ENCODE measurements at regions of chr10 and their contacts with region 1.

Region 1: GRCh38 chr10:25080880-25081581 is 64.6 kb downstream of the THNSL1 start:
- DNase-seq: peak; percentile 88
- ATAC-seq: peak; percentile 82
- H3K4me3 ChIP-seq: no peak overlapping the region
- H3K27ac ChIP-seq: peak overlapping the region; percentile 37
- H3K4me1 ChIP-seq: peaks cover 72% of the 10 kb centered on the region
- H3K27me3 ChIP-seq: no peaks in the 10 kb centered on the region
- CTCF ChIP-seq: peak; percentile 94
- EP300 ChIP-seq: peak in 1 of 2 experiments; percentile 64; a peak in 2 of 4 replicates
- POLR2A ChIP-seq: no peak
- RAD21 ChIP-seq: peak; percentile 88

Region 2: GRCh38 chr10:24642622-24643417 is 438.2 kb before region 1 on chr10:
- CTCF ChIA-PET with region 1: interaction called, 11 read pairs
- POLR2A ChIA-PET with region 1: interaction called, 4 read pairs
- in situ Hi-C with region 1: loop called (anchors 10 kb)
- intact Hi-C with region 1: loop called (anchors 1 kb)
- DNase-seq: peak; percentile 89
- ATAC-seq: peak; percentile 99
- H3K4me3 ChIP-seq: no peak overlapping the region
- H3K27ac ChIP-seq: peak overlapping the region; percentile 5
- H3K4me1 ChIP-seq: peaks cover 12% of the 10 kb centered on the region
- H3K27me3 ChIP-seq: no peaks in the 10 kb centered on the region
- CTCF ChIP-seq: peak; percentile 85
- EP300 ChIP-seq: peak in 1 of 2 experiments; percentile 57; a peak in 1 of 4 replicates
- POLR2A ChIP-seq: no peak
- RAD21 ChIP-seq: peak; percentile 81

Region 3: GRCh38 chr10:24814568-24815313 is 266.3 kb before region 1 on chr10:
- CTCF ChIA-PET with region 1: no interaction called
- POLR2A ChIA-PET with region 1: no interaction called
- in situ Hi-C with region 1: no loop called
- intact Hi-C with region 1: loop called (anchors 10 kb)
- DNase-seq: peak; percentile 24
- ATAC-seq: no peak
- H3K4me3 ChIP-seq: no peak overlapping the region
- H3K27ac ChIP-seq: no peak overlapping the region
- H3K4me1 ChIP-seq: peaks cover 10% of the 10 kb centered on the region
- H3K27me3 ChIP-seq: no peaks in the 10 kb centered on the region
- CTCF ChIP-seq: no peak
- EP300 ChIP-seq: no peak
- POLR2A ChIP-seq: no peak
- RAD21 ChIP-seq: no peak

Region 4: GRCh38 chr10:24974976-24975375 is 106.1 kb before region 1 on chr10:
- CTCF ChIA-PET with region 1: no interaction called
- POLR2A ChIA-PET with region 1: no interaction called
- in situ Hi-C with region 1: no loop called
- intact Hi-C with region 1: loop called (anchors 1 kb)
- DNase-seq: peak; percentile 32
- ATAC-seq: peak; percentile 67
- H3K4me3 ChIP-seq: no peak overlapping the region
- H3K27ac ChIP-seq: no peak overlapping the region
- H3K4me1 ChIP-seq: peaks cover 23% of the 10 kb centered on the region
- H3K27me3 ChIP-seq: no peaks in the 10 kb centered on the region
- CTCF ChIP-seq: no peak
- EP300 ChIP-seq: no peak
- POLR2A ChIP-seq: no peak
- RAD21 ChIP-seq: no peak

Region 5: DNA sequence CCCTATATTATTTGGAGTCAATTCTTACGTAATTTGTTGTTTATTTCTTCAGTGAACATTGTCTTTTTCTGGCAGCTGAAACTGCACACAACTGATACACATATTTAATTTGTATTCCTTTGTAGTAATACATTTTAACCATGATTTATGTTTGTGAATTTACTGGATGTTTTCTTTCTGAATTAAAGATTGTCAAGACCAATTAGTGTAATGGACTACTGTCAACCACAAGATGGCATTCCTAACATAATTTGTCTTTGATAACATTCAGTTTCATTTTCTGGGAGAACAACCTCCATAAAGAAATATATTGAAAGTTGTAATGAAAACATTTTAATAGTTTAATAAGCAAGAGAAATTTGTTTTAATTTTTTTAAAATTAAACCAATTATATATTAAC is 54.6 kb before region 1 on chr10:
- CTCF ChIA-PET with region 1: interaction called, 12 read pairs
- POLR2A ChIA-PET with region 1: no interaction called
- in situ Hi-C with region 1: no loop called
- intact Hi-C with region 1: loop called (anchors 2 kb)
- DNase-seq: no peak
- ATAC-seq: no peak
- H3K4me3 ChIP-seq: no peak overlapping the region
- H3K27ac ChIP-seq: no peak overlapping the region
- H3K4me1 ChIP-seq: 0 out of 2 replicates have a peak, but pooled peaks cover 6% of the 10 kb centered on the region
- H3K27me3 ChIP-seq: no peaks in the 10 kb centered on the region
- CTCF ChIP-seq: peak; percentile 42
- EP300 ChIP-seq: no peak
- POLR2A ChIP-seq: no peak
- RAD21 ChIP-seq: no peak

Region 6: DNA sequence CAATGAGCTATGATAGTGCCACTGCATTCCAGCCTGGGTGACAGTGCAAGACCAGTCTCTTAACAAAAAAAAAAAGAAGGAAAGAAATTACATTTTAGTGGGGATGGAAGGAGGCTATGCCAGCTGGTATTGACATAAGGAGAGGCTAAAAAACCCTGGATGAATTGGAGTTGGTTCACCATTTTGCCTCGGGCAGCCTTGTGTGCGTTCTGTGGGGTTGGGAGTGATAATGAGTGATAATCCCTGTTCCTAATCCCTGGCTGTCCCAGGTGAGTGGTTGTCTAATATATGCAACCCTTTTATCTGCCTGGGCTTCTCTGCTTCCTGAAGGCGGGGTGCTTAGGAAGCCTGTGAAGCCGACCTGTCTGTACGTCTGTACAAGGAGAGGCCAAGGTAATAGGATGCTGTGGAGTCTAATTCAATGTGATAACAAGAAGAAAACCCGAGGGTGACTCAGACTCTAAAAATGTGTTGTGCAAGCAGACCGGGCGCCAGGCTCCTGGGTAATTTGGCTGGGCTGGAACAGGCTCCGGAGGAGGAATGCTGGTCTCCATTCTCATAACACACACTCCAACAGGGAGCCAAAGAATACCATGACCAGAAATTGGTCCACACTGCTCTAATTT is 21.2 kb before region 1 on chr10:
- CTCF ChIA-PET with region 1: no interaction called
- POLR2A ChIA-PET with region 1: interaction called, 8 read pairs
- in situ Hi-C with region 1: no loop called
- intact Hi-C with region 1: loop called (anchors 1 kb)
- DNase-seq: peak; percentile 87
- ATAC-seq: peak; percentile 72
- H3K4me3 ChIP-seq: no peak overlapping the region
- H3K27ac ChIP-seq: no peak overlapping the region
- H3K4me1 ChIP-seq: peaks cover 47% of the 10 kb centered on the region
- H3K27me3 ChIP-seq: no peaks in the 10 kb centered on the region
- CTCF ChIP-seq: no peak
- EP300 ChIP-seq: peak in 1 of 2 experiments; percentile 57; a peak in 2 of 4 replicates
- POLR2A ChIP-seq: no peak
- RAD21 ChIP-seq: no peak

Measured in HepG2 (cell line).